ENCODE measurements at regions of chr17 and their contacts with region 1.

Region 1: DNA sequence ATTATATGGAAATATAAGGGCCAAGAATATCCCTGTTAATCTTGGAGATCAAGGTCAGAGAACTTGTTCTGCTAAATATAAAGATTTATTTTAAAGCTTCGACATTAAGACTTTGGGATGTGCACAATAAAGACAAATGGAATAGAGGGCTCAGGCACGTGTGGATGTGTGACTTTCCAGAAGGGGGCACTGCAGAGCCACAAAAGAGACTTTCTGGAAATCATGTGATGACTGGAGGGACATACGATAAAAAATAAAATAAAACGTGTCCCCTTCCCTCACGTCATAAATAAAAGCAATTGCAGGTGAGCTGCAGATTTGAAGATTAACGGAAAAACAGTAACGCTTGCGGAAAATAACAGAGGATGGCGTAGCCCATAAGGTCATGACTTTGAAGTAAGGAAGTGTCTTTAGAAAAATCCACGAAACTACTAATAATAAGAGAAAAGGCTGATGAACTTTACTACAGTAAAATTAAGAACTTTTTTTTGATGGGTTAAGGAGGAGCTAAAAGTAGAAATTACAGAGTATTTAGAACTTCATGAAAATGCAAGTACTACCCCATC is 9.4 kb upstream of the ENGASE start:
- DNase-seq: peak; percentile 78
- H3K4me3 Mint-ChIP-seq: peak overlapping the region; percentile 51
- H3K27ac Mint-ChIP-seq: no peak overlapping the region
- H3K4me1 Mint-ChIP-seq: peaks cover 4% of the 10 kb centered on the region
- H3K27me3 Mint-ChIP-seq: peaks cover 2% of the 10 kb centered on the region

Region 2: DNA sequence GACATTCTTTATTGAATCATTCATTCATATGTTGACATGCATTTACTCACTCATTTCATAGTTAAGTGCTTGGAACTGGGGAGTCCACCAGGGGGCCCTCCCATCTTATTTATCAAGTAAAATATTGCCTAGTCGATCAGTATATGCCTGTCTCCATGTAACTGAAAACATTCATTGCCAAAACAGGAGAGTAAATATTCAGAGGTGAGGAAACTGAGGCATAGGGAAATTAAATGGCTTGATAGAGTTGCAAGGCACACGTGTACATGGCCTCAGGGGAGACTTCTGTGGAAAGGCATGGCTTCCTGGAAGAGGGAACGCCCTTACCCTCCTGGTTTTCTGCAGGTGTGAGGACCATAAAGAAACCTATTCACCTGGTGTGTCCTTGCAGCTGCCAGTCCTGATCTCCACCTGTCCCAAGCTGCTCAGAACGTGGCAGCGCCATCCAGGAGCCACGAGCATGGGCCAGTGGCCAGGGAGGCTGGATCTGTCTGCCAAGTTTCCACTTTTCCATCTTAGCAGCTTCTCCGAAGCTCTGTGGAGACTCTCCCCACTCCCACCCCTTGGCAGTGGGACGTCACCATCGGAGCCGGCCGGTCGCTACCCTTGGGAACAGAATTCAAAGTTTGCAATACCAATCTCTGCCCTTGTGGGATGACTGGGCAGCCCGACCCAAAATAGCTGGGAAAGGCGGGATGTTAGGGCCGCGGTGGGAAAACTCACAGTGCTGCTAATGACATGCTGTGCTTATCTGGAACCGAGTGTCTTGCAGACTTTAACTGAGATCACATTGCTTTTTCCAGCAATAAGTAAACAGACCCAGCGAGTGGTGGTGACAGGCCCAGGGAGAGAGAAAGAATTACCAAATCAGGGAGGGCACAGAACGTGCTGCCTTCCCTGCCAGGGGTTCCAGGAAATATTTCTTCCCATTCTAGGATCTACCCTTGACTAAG is 45.3 kb before region 1 on chr17:
- CTCF ChIA-PET with region 1: no interaction called
- POLR2A ChIA-PET with region 1: no interaction called
- intact Hi-C with region 1: loop called (anchors 1 kb)
- DNase-seq: peak; percentile 58
- H3K4me3 Mint-ChIP-seq: no peak overlapping the region
- H3K27ac Mint-ChIP-seq: no peak overlapping the region
- H3K4me1 Mint-ChIP-seq: peaks cover 8% of the 10 kb centered on the region
- H3K27me3 Mint-ChIP-seq: peaks cover 18% of the 10 kb centered on the region

Region 3: GRCh38 chr17:79045842-79046196 is 19.4 kb before region 1 on chr17:
- CTCF ChIA-PET with region 1: interaction called, 11 read pairs
- POLR2A ChIA-PET with region 1: no interaction called
- intact Hi-C with region 1: no loop called
- DNase-seq: peak; percentile 75
- H3K4me3 Mint-ChIP-seq: no peak overlapping the region
- H3K27ac Mint-ChIP-seq: no peak overlapping the region
- H3K4me1 Mint-ChIP-seq: no peaks in the 10 kb centered on the region
- H3K27me3 Mint-ChIP-seq: peaks cover 15% of the 10 kb centered on the region

Region 4: DNA sequence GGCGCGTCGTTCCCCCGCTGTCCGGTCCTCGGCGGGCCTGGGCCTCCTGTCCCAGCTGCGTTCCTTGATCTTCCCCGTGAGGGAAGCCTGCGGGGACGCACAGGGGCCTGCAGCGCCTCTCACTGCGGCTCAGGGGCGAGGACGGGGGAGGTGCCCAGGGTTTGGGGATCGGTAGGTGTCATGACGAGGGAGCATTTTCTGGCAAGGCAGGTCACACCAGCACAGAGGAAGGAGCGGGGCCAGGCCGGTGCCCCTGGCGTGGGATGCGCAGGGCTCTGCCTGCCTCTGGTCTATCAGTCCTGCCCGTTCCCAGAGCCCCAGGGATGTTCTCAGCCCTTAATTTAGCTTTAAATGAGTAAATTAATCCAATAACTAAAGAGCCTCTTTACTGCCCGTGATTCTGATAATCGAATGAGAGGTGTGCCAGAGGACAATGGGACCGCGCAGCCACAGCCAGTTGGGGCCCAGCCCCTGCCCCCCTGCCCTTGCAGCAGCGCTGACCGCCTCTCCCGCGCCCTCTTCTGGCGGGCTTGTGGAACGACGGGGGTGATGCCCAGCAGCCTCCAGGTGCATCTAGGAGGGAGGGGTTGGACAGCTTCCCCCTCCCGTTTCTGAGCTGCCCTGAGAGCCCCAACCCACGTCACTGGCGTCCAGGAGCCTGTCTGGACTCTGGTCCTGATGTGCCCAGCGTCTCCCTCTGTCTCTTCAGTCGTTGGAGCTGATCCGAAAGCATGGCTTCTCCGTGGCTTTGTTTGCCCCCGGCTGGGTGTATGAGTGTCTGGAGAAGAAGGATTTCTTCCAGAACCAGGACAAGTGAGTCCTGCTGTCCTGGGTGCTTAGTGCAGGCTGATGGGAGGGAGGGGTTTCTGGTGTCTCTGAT is 17.4 kb after region 1 on chr17:
- CTCF ChIA-PET with region 1: interaction called, 9 read pairs
- POLR2A ChIA-PET with region 1: no interaction called
- intact Hi-C with region 1: loop called (anchors 1 kb)
- DNase-seq: peak; percentile 67
- H3K4me3 Mint-ChIP-seq: no peak overlapping the region
- H3K27ac Mint-ChIP-seq: no peak overlapping the region
- H3K4me1 Mint-ChIP-seq: no peaks in the 10 kb centered on the region
- H3K27me3 Mint-ChIP-seq: no peaks in the 10 kb centered on the region

Region 5: DNA sequence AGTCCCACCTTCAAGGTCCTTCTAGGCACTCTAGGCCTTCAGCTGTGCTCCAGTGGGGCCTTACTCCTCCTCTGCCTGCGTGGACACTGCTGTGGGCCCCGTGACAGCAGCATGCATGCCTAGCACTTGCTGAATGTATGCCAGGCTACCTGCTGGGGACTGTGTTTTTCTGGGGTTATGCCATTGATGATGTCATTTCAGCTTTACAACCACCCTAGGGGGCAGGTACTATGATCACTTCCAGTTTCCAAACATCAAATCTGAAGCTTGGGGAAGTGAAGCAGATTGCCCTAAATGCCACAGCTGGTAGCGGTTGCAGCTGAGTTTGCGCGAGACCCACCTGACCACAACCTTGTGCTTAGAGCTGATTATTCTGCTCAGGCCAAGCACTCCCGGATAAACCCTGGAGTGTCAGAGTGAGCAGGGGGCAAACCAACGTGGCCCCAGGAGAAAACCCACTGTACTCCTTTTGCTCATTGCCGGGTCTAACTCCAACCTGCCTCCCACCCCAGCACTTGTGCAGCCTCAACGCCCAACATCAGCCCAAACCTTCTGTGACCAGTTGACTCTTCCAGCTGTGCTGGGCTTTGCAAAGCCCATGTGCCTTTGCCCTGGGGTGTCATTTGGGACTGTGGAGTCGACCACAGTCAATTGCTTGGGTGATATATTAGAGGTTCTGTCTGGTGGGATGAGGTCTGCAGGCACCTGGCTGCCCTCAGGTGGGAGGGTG is 177.8 kb after region 1 on chr17:
- CTCF ChIA-PET with region 1: no interaction called
- POLR2A ChIA-PET with region 1: no interaction called
- intact Hi-C with region 1: no loop called
- DNase-seq: no peak
- H3K4me3 Mint-ChIP-seq: no peak overlapping the region
- H3K27ac Mint-ChIP-seq: no peak overlapping the region
- H3K4me1 Mint-ChIP-seq: no peaks in the 10 kb centered on the region
- H3K27me3 Mint-ChIP-seq: peaks cover 2% of the 10 kb centered on the region

Region 6: GRCh38 chr17:79393358-79394202 is 328.4 kb after region 1 on chr17:
- CTCF ChIA-PET with region 1: interaction called, 29 read pairs
- POLR2A ChIA-PET with region 1: no interaction called
- intact Hi-C with region 1: loop called (anchors 1 kb)
- DNase-seq: peak; percentile 78
- H3K4me3 Mint-ChIP-seq: peak overlapping the region; percentile 5
- H3K27ac Mint-ChIP-seq: no peak overlapping the region
- H3K4me1 Mint-ChIP-seq: peaks cover 4% of the 10 kb centered on the region
- H3K27me3 Mint-ChIP-seq: peaks cover 53% of the 10 kb centered on the region